Activated CD4-positive, alpha-beta T cell treated with anti-CD3 and anti-CD28 coated beads for 36 hours (primary cell): ENCODE measurements at regions of chr1 and their contacts with region 1.

Region 1: DNA sequence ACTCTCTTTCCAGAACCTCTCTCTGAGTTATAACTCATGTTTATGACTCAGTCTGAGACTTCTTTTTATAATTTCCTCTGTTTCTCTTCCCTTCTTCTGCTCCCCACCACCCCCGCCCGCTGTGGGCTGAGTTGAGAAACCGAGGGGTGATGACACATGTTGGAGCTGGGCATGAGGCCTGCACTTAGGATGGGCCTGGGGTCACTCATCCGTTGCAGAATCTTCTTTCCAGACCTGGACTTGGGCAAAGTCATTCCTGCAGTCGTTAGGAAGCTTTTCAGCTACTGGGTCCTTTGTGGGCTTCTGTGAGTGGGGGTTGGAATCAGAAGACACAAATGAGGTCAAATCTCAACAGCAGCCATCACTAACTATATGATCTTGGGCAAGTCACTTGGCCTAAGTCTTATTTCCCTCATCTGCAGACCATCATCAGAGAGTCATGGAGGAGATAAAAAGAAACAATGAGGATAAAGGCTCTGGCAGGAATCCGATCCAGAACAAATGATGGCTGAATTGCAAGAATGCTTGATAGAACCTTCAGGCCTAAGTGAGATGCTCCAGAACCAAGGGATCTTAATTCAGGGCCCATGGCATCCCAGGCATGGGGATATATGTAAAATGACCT is 53.4 kb downstream of the RPS6KA1 start:
- DNase-seq: peak; percentile 93
- ATAC-seq: peak; percentile 55
- H3K4me3 Mint-ChIP-seq: peak overlapping the region; percentile 35
- H3K27ac Mint-ChIP-seq: peak overlapping the region; percentile 95
- H3K4me1 Mint-ChIP-seq: peaks cover 54% of the 10 kb centered on the region
- H3K27me3 Mint-ChIP-seq: no peaks in the 10 kb centered on the region

Region 2: GRCh38 chr1:26700711-26701110 is 117.8 kb after region 1 on chr1:
- CTCF ChIA-PET with region 1: interaction called, 3 read pairs
- POLR2A ChIA-PET with region 1: interaction called, 4 read pairs
- intact Hi-C with region 1: loop called in 1 of 2 experiments (anchors 2 kb)
- DNase-seq: no peak
- ATAC-seq: no peak
- H3K4me3 Mint-ChIP-seq: no peak overlapping the region
- H3K27ac Mint-ChIP-seq: no peak overlapping the region
- H3K4me1 Mint-ChIP-seq: peaks cover 10% of the 10 kb centered on the region
- H3K27me3 Mint-ChIP-seq: no peaks in the 10 kb centered on the region